GM18951 (cell line): ENCODE measurements at regions of chr22 and their contacts with region 1.

Region 1: GRCh38 chr22:24325105-24325757 is 54.6 kb downstream of the SPECC1L start:
- POLR2A ChIP-seq: no peak

Region 2: DNA sequence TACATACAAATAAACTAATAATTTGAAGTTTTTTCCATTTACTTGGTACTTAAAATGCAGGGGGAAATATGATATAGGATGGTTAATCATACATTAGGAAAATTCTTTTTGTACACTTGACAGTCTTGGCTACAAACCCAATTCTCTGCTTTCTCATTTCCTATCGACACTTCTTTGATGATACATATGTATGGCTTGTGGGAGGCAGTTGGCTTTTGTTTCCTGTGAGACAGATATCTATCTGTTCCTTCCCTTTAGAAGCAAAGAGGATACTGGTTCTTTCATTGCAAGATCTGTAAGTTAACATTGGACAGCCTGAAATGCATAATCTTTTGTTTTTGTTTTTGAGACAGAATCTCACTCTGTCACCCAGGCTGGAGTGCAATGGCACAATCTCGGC is 54.3 kb after region 1 on chr22:
- in situ Hi-C with region 1: no loop called
- POLR2A ChIP-seq: no peak

Region 3: DNA sequence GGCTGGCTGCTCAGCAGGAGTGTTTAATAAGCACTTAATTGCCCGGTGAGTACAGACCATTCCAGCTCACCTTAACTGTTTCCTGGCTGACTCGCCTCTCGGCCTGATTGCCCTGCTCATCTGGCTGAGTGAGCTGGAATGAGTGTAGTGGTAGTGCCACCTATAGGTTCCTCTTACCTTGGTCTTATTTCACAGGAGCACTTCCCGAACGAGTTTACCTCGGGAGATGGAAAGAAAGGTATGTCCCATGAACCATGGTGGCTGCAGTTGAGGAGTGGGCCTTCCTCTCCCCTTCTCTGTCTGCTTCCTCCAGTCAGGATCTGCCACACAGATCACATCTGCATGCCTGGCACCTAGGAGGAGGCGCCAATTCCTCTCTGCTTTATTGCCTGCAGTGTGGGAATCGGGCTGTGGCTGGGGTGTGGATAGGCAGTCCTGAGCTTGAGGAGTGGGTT is 196.6 kb after region 1 on chr22:
- in situ Hi-C with region 1: loop called (anchors 5 kb)
- POLR2A ChIP-seq: no peak